OCI-LY7 (cell line): ENCODE measurements at regions of chr2 and their contacts with region 1.

Region 1: GRCh38 chr2:46657042-46657504 is 177.7 kb downstream of the TMEM247 start:
- DNase-seq: peak; percentile 48
- H3K4me3 ChIP-seq: no peak overlapping the region
- H3K27ac ChIP-seq: no peak overlapping the region
- H3K4me1 ChIP-seq: no peaks in the 10 kb centered on the region
- CTCF ChIP-seq: peak; percentile 77

Region 2: GRCh38 chr2:45353879-45354278 is 1303.2 kb before region 1 on chr2:
- CTCF ChIA-PET with region 1: no interaction called
- POLR2A ChIA-PET with region 1: no interaction called
- intact Hi-C with region 1: no loop called
- DNase-seq: no peak
- H3K4me3 ChIP-seq: no peak overlapping the region
- H3K27ac ChIP-seq: no peak overlapping the region
- H3K4me1 ChIP-seq: no peaks in the 10 kb centered on the region
- CTCF ChIP-seq: no peak

Region 3: DNA sequence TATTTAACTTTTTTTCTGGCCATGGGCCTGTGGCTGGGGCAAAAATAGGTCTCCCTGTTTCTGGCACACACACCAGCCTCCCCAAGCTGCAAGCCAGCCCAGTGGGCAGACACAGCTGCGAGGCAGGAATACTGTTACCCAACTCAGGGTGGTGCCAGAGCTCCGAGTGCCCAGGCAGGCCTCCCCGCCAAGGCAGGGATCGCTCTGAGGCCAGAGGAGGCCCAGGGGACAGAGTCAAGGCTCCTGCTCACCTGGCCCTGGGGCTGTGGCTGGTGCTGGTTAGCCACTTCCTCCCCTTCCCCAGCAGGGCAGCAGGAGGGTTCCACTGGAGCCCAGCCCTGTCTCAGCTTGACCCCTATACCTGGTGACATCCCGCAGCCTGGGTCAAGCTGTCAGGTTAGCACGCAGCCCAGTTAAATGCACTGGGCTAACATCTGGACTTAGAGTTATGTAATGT is 426.9 kb before region 1 on chr2:
- CTCF ChIA-PET with region 1: no interaction called
- POLR2A ChIA-PET with region 1: no interaction called
- intact Hi-C with region 1: no loop called
- DNase-seq: no peak
- H3K4me3 ChIP-seq: no peak overlapping the region
- H3K27ac ChIP-seq: no peak overlapping the region
- H3K4me1 ChIP-seq: no peaks in the 10 kb centered on the region
- CTCF ChIP-seq: no peak

Region 4: DNA sequence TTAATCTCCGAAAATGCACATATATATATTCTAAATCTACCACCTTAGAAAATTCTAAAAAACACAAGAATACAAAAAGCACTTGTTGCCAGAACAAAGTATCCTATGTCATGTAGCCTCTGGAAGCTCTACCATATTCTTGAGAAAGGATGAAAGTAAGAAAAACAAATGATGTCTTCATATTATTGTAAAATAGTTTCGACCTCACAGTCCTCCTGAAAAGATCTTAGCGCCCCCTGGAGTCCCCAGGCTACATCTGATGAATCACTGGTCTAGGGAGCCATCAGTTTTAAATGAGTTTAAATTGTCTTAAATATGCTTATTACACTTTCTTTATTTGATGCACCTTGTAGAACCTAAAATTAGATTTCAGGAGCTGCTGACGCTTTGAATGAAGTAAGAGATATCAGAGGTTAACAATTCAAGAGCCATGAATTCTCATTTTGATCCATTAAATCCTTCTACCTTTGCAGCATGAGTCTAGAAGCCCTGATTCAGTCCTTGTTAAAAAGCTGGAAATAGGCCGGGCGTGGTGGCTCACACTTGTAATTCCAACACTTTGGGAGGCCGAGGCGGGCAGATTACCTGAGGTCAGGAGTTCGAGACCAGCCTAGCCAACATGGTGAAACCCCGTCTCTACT is 119.7 kb after region 1 on chr2:
- CTCF ChIA-PET with region 1: no interaction called
- POLR2A ChIA-PET with region 1: no interaction called
- intact Hi-C with region 1: loop called (anchors 5 kb)
- DNase-seq: peak; percentile 55
- H3K4me3 ChIP-seq: no peak overlapping the region
- H3K27ac ChIP-seq: no peak overlapping the region
- H3K4me1 ChIP-seq: no peaks in the 10 kb centered on the region
- CTCF ChIP-seq: peak; percentile 94